ENCODE measurements at regions of chr2 and their contacts with region 1.

Region 1: GRCh38 chr2:72892506-72893173 is 5.4 kb downstream of the SPR start:
- DNase-seq: peak; percentile 79
- ATAC-seq: peak; percentile 77

Region 2: DNA sequence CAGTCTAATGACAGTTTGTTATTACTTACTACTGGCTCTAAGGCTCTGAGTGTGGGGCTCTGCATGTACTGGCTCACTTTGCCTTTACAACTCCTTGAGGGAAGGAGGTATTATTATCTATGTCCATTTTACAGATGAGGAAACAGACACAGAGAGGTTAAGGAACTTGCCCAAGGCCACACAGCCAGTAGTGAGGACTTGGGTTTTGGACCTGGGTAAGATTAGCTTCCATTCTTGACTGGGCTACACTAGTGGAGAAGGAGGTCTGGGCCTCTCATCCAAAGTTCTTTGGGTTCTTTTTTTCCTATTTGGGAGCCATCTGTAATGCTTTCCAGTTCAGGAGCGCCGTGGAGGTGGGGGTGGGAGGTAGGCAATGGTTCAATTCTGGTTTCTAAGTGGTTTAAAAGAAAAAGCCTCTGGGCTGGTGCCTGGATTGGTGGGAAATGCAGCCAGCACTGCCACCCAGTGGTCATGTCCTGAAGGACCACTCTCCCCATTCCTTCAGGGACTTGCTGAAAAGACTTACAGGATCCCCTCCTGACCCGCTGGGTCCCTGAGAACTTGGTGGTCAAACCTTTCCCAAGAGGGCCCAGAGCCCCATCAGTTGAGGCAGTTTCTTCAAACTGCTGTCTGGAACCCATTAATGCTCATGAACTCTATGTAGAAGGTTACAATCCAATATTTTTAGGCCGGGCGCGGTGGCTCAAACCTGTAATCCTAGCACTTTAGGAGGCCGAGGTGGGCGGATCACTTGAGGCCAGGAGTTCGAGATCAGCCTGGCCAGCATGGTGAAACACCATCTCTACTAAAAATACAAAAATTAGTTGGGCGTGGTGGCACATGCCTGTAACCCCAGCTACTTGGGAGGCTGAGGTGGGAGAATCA is 271.1 kb after region 1 on chr2:
- intact Hi-C with region 1: loop called (anchors 5 kb)
- DNase-seq: peak; percentile 77
- ATAC-seq: peak; percentile 84

Region 3: DNA sequence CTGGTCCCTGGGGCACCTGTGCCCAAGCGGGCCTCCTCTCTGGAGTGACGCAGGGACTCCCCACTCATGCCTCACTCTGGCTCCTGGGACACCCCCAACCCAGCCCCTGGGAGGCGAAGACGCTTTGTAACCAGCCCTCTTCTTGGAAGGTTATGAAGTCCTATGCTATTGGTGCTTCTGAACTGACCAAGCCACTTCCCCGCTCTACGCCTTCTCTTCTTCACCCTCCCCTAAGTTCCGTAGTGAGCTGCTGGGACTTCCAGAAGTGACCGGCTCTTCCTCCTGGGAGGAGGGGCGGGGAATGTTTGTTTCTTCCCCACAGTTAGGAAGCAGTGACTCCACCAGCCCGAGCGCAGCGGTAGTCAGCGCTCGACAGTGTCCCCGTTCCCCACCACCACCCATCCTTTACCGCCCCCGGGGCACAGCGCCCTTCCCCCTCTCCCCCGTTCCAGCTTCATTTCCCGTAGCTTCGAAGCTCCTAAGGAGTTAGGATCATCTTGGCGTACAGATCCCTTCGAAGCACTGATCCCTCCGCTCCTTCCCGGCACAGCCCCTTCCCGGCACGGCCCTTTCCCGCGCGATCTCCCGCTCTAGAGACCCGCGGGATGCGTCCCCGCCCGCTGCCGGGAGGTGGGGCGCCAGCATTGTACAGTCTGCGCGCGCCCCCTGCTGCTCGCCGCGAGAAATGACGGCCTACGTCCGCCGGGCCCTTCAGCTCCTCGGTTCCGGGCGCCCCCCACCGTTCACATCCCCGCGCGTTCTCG is 284.4 kb after region 1 on chr2:
- intact Hi-C with region 1: loop called (anchors 5 kb)
- DNase-seq: peak; percentile 95
- ATAC-seq: peak; percentile 97